ENCODE measurements at regions of chr4 and their contacts with region 1.

Region 1: GRCh38 chr4:73019462-73020047 is 50.0 kb downstream of the COX18 start:
- DNase-seq: peak; percentile 14
- H3K4me3 Mint-ChIP-seq: no peak overlapping the region
- H3K27ac Mint-ChIP-seq: no peak overlapping the region
- H3K4me1 Mint-ChIP-seq: no peaks in the 10 kb centered on the region
- H3K27me3 Mint-ChIP-seq: peaks cover 20% of the 10 kb centered on the region
- CTCF ChIP-seq: peak; percentile 42

Region 2: DNA sequence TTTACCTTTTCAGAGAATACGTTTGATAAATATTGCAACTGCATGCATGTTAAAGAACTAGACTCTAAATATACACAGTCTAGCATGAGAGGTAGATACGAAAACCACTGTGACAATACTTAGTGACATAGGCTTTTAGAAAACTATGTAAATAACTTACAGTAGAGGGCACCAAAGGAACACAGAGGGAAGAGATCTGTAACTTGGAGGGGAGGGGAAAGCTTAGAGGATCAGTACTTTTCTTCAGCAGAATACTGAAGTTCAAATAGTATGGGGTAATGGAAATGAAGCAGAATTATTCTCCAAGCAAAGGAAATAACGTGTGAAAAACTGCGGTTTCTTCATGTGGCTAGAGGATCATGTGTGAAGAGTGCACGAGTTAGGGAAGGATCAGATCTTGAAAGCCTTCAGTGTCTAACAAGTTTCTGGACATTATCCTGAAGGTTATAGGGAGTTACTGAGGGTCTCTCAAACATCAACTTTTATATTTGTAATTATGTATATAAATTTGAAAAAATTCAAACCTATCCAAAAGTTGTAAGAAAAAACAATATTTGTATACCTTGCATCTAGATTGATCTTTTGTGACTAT is 723.5 kb before region 1 on chr4:
- CTCF ChIA-PET with region 1: no interaction called
- intact Hi-C with region 1: loop called (anchors 10 kb)
- DNase-seq: no peak
- H3K4me3 Mint-ChIP-seq: no peak overlapping the region
- H3K27ac Mint-ChIP-seq: no peak overlapping the region
- H3K4me1 Mint-ChIP-seq: peaks cover 8% of the 10 kb centered on the region
- H3K27me3 Mint-ChIP-seq: no peaks in the 10 kb centered on the region
- CTCF ChIP-seq: no peak

Region 3: DNA sequence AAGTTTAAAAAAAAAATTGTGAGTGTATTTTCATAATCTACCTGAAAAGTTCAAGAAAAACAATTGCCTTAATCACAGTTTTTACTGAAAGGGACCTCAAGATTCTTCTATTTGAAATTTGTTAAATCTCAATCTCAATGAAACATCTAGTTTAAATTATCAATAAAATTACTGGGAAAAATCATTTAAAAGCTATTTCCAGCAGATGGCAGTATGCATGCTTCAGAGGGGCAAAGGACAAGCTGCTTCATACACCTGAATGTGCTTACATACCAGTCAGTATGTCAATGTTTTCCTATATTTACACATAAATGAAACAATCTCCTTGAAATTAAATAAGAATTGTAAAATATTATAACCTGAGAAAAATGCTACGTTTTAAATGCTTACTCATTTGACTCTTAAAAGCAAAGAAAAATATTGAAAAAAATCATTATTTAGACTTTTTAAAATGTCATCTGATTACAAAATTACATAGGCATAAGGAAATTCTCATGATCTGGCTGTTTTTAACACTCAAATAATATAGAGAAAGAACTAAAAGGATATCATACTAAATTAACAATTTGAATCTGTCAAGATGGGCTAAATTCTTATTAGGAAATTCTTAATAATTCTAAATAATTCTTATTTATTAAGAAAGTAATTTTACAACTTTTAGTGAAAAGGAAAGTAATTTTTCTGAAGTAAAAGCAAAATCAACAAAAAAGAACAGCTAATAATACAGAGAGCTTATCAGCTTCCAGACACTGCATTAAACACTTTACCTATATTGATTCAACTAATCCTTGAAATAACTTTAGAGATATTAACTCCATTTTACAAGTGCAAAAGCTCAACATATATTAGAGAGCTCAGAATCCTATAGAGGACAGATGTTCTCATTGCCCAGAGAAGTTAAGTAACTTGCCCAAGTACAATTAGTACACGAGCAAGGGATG is 692.6 kb before region 1 on chr4:
- CTCF ChIA-PET with region 1: no interaction called
- intact Hi-C with region 1: loop called (anchors 10 kb)
- DNase-seq: no peak
- H3K4me3 Mint-ChIP-seq: no peak overlapping the region
- H3K27ac Mint-ChIP-seq: no peak overlapping the region
- H3K4me1 Mint-ChIP-seq: peaks cover 23% of the 10 kb centered on the region
- H3K27me3 Mint-ChIP-seq: no peaks in the 10 kb centered on the region
- CTCF ChIP-seq: peak; percentile 26

Region 4: DNA sequence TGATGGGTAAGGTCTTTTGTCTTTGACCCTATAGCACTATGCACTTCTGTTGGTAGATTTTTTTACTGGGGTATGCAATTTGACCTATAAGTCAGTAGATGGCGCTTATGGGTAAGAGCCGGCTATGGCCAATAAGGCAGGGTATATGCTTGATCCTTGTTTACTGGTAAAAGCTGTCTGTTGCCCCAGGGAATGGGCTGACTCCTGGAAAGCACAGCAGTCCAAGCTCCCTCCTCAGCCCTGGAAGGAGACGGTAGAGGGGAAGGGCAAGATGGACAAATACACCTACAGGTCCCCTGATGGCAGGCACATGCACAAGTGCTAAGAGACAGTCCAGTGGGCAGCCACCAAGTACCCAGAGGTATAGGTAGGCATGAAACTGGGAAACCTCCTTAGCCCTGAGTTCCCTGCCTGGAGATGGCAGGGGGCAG is 514.2 kb before region 1 on chr4:
- CTCF ChIA-PET with region 1: no interaction called
- intact Hi-C with region 1: loop called (anchors 1 kb)
- DNase-seq: peak; percentile 2
- H3K4me3 Mint-ChIP-seq: no peak overlapping the region
- H3K27ac Mint-ChIP-seq: no peak overlapping the region
- H3K4me1 Mint-ChIP-seq: no peaks in the 10 kb centered on the region
- H3K27me3 Mint-ChIP-seq: peaks cover 13% of the 10 kb centered on the region
- CTCF ChIP-seq: peak; percentile 28

Region 5: GRCh38 chr4:72701987-72702819 is 317.4 kb before region 1 on chr4:
- CTCF ChIA-PET with region 1: no interaction called
- intact Hi-C with region 1: loop called (anchors 1 kb)
- DNase-seq: peak; percentile 28
- H3K4me3 Mint-ChIP-seq: peak overlapping the region; percentile 50
- H3K27ac Mint-ChIP-seq: no peak overlapping the region
- H3K4me1 Mint-ChIP-seq: no peaks in the 10 kb centered on the region
- H3K27me3 Mint-ChIP-seq: peaks cover 3% of the 10 kb centered on the region
- CTCF ChIP-seq: no peak

Region 6: DNA sequence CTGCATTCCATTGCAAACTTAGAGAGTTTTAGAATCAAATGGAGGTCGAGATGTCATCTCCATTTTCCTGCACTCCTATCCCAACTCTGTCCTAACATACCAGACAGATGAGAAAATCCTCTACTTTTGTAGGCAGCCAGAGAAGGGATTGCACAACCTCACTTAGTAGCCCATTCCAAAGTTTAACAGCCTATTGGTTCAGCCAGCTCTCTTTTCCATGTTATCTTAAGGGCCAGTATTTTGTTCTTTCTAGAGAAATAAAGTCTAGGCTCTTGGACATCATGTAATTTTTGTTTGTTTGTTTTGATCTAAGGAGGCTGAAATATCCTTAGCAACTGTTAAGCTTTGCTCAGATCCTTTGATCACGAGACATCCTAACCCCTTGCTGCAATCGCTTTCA is 123.0 kb before region 1 on chr4:
- CTCF ChIA-PET with region 1: no interaction called
- intact Hi-C with region 1: loop called (anchors 5 kb)
- DNase-seq: no peak
- H3K4me3 Mint-ChIP-seq: no peak overlapping the region
- H3K27ac Mint-ChIP-seq: no peak overlapping the region
- H3K4me1 Mint-ChIP-seq: no peaks in the 10 kb centered on the region
- H3K27me3 Mint-ChIP-seq: no peaks in the 10 kb centered on the region
- CTCF ChIP-seq: no peak

Measured in Calu3 (cell line).